AG04450 (cell line): ENCODE measurements at regions of chr3 and their contacts with region 1.

Region 1: GRCh38 chr3:112642912-112643506 is 2.1 kb upstream of the CCDC80 start:
- DNase-seq: peak; percentile 86
- H3K4me3 ChIP-seq: peak overlapping the region; percentile 28
- H3K27ac ChIP-seq: no peak overlapping the region
- H3K27me3 ChIP-seq: no peaks in the 10 kb centered on the region
- CTCF ChIP-seq: peak; percentile 96

Region 2: GRCh38 chr3:112605285-112605684 is 37.7 kb before region 1 on chr3:
- CTCF ChIA-PET with region 1: interaction called, 14 read pairs
- POLR2A ChIA-PET with region 1: no interaction called
- DNase-seq: peak; percentile 90
- H3K4me3 ChIP-seq: no peak overlapping the region
- H3K27ac ChIP-seq: peak overlapping the region; percentile 73
- H3K27me3 ChIP-seq: no peaks in the 10 kb centered on the region
- CTCF ChIP-seq: no peak

Region 3: GRCh38 chr3:112990672-112991602 is 347.9 kb after region 1 on chr3 and contains the start of gene GTPBP8:
- CTCF ChIA-PET with region 1: interaction called, 28 read pairs
- POLR2A ChIA-PET with region 1: interaction called, 8 read pairs
- DNase-seq: peak; percentile 59
- H3K4me3 ChIP-seq: peak within 1 kb of the TSS; percentile 94
- H3K27ac ChIP-seq: peak within 1 kb of the TSS; percentile 89
- H3K27me3 ChIP-seq: no peaks in the 10 kb centered on the region
- CTCF ChIP-seq: no peak
- polyA plus RNA-seq, gene GTPBP8: 14.9 and 17.3 TPM in 2 replicates

Region 4: GRCh38 chr3:113423699-113424098 is 780.7 kb after region 1 on chr3:
- CTCF ChIA-PET with region 1: no interaction called
- POLR2A ChIA-PET with region 1: no interaction called
- DNase-seq: no peak
- H3K4me3 ChIP-seq: no peak overlapping the region
- H3K27ac ChIP-seq: no peak overlapping the region
- H3K27me3 ChIP-seq: no peaks in the 10 kb centered on the region
- CTCF ChIP-seq: no peak